Stomach (tissue), 19 donors: ENCODE measurements at regions of chr16 and their contacts with region 1.

Region 1: GRCh38 chr16:29729116-29729521 is 16.7 kb downstream of the C16orf54 start:
- DNase-seq: peak in 1 of 2 donors; percentile 59
- H3K4me3 ChIP-seq: no peak overlapping the region
- H3K27ac ChIP-seq: no peak overlapping the region
- H3K4me1 ChIP-seq: peaks cover 0 to 6% (median 0%) of the 10 kb centered on the region in 4 donors
- H3K27me3 ChIP-seq: peaks cover 0 to 16% (median 0%) of the 10 kb centered on the region in 3 donors
- CTCF ChIP-seq: peak in 4 of 7 experiments; percentile 18 to 40 (median 32)
- EP300 ChIP-seq: no peak
- POLR2A ChIP-seq: no peak

Region 2: DNA sequence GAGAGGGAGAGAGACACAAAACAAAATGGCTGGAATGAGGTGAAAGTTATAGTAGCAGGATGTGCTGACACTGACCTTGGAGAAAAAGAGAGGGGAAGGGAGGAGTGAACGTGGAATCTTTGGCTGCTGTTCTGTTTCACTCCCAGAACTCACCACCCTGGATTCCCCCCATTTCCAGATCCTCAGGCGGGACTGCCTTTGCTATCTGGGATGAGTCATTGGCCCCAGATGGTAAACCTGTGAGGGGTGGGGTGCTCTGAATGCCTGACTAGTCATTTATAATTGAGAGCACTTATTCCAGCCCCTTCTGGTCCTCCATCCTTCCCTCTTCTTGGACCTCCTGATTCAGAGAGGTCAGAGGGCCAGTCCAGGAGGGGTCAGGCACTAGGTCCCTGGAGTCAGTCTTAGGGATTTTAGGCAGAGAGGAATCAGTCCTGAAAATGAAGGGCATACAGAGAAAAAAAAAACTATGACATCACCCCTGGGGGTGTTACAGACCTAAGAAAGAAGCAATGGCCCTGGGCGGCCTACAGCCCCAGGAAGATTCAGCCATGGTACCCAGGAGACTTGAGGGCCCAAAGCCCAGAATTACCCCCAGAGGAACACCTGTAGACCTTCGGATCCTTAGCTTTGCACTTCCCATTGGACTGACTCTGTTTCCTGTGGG is 46.8 kb after region 1 on chr16:
- intact Hi-C with region 1: loop called (anchors 5 kb)
- DNase-seq: peak in 1 of 2 donors; percentile 27
- H3K4me3 ChIP-seq: no peak overlapping the region
- H3K27ac ChIP-seq: no peak overlapping the region
- H3K4me1 ChIP-seq: no peaks in the 10 kb centered on the region
- H3K27me3 ChIP-seq: peaks cover 0 to 14% (median 0%) of the 10 kb centered on the region in 3 donors
- CTCF ChIP-seq: no peak
- EP300 ChIP-seq: no peak
- POLR2A ChIP-seq: no peak